ENCODE measurements at regions of chr3 and their contacts with region 1.

Region 1: DNA sequence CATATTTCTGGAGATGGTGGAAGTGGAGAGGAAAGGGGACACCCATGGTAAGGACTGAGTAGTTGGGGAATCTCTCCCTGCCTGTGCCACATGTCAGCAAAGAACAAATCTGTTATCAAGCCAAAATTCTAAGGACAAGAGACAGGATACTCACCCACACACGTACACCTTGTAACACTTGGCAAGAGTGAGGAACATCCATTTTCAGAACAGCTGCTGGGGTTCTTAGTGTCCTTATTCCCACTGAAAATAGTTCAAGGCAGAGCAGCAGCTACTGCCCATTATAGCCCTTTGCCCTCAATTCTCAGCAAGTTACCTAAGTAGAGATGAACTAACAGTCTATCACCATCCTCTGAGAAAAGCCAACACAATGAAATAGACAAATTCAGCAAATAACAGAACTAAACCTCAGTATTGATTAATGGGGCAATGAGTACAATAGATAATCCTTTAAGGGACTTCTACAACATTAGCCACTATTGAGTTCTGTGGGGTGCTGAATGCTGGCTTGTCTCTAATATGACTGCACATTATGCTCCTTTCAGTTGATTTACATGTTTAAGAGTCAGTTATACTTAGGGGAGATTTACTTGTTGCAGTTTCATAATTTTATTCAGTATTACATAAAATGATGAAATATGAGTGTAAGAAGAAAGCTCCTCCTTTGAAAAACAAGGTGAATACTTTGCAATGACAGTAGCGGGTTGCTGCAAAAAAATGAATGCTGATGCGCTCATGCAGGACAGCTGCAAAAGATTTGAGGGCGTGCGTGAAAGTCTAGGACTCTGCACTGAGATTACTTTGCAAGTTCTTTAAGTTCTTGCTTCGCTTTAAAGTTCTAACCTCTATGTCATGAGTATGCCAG is 22.4 kb downstream of the SENP5 start:
- DNase-seq: no peak
- H3K4me3 ChIP-seq: no peak overlapping the region
- H3K27ac ChIP-seq: no peak overlapping the region
- H3K27me3 ChIP-seq: no peaks in the 10 kb centered on the region
- CTCF ChIP-seq: no peak

Region 2: GRCh38 chr3:196585044-196585757 is 304.9 kb before region 1 on chr3:
- CTCF ChIA-PET with region 1: no interaction called
- POLR2A ChIA-PET with region 1: no interaction called
- DNase-seq: no peak
- H3K4me3 ChIP-seq: no peak overlapping the region
- H3K27ac ChIP-seq: no peak overlapping the region
- H3K27me3 ChIP-seq: no peaks in the 10 kb centered on the region
- CTCF ChIP-seq: no peak

Region 3: GRCh38 chr3:196875258-196875657 is 14.8 kb before region 1 on chr3:
- CTCF ChIA-PET with region 1: no interaction called
- POLR2A ChIA-PET with region 1: no interaction called
- DNase-seq: no peak
- H3K4me3 ChIP-seq: no peak overlapping the region
- H3K27ac ChIP-seq: no peak overlapping the region
- H3K27me3 ChIP-seq: no peaks in the 10 kb centered on the region
- CTCF ChIP-seq: no peak

Region 4: DNA sequence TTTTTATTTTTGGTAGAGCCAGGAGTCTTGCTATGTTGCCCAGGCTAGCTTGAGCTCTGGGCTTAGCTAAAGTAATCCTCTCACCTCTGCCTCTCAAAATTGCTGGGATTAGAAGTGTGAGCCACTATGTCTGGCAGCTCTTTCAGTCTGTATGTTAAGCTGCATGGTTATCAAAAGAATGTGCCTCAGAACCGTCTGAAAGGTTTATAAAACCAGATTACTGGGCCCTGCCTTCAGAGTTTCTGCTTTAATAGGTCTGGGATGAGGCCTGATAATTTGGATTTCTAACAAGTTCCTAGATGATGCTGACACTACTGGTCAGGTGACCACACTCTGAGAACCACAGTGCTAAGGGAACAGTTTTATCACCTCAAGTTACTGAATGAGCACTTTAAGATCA is 12.2 kb after region 1 on chr3:
- CTCF ChIA-PET with region 1: interaction called, 10 read pairs
- POLR2A ChIA-PET with region 1: no interaction called
- DNase-seq: no peak
- H3K4me3 ChIP-seq: no peak overlapping the region
- H3K27ac ChIP-seq: no peak overlapping the region
- H3K27me3 ChIP-seq: no peaks in the 10 kb centered on the region
- CTCF ChIP-seq: no peak